CD8-positive, alpha-beta T cell (primary cell): ENCODE measurements at regions of chrX and their contacts with region 1.

Region 1: DNA sequence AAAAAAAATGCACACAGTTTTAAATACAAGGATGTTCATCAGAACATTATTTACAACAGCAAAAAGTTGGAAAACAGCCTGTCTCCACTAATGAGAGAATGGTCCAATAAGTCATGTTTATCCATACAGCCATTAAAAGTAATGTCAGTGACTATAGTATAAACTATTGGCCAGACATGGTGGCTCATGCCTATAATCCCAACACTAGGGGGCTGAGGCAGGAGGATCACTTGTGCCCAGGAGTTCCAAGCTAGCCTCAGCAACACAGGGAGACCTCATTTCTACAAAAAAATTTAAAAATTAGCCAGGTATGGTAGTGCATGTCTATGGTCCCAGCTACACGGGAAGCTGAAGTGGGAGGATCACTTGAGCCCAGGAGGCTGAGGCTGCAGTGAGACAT is 48.1 kb upstream of the IL13RA1 start:
- DNase-seq: no peak
- ATAC-seq: no peak
- H3K4me3 ChIP-seq: no peak overlapping the region
- H3K4me3 Mint-ChIP-seq: no peak overlapping the region
- H3K27ac ChIP-seq: no peak overlapping the region
- H3K27ac Mint-ChIP-seq: no peak overlapping the region
- H3K4me1 ChIP-seq: no peaks in the 10 kb centered on the region
- H3K4me1 Mint-ChIP-seq: no peaks in the 10 kb centered on the region
- H3K27me3 ChIP-seq: no peaks in the 10 kb centered on the region
- H3K27me3 Mint-ChIP-seq: no peaks in the 10 kb centered on the region
- CTCF ChIP-seq: no peak

Region 2: DNA sequence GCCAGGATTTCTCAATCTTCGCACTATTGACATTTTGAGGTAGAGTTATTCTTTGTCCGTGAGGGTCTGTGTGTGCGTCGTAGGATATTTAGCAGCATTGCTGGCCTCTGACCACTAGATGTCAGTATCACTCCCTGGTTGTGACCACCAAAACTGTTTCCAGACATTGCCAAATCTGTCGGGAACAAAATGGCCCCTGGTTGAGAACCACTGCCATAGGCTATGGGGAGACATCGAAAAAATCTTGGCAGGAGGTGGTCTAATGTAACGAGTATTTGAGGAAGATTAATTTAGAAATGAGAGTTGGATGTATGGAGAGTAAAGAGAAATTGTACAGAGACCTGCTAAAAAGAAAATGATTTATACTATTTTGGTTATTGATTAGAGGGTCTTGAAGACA is 75.3 kb before region 1 on chrX:
- CTCF ChIA-PET with region 1: no interaction called
- POLR2A ChIA-PET with region 1: no interaction called
- intact Hi-C with region 1: no loop called
- DNase-seq: peak in 7 of 9 experiments; percentile 11 to 67 (median 29)
- ATAC-seq: peak; percentile 77
- H3K4me3 ChIP-seq: no peak overlapping the region
- H3K4me3 Mint-ChIP-seq: no peak overlapping the region
- H3K27ac ChIP-seq: no peak overlapping the region
- H3K27ac Mint-ChIP-seq: peak overlapping the region; percentile 85
- H3K4me1 ChIP-seq: no peaks in the 10 kb centered on the region
- H3K4me1 Mint-ChIP-seq: peaks cover 26% of the 10 kb centered on the region
- H3K27me3 ChIP-seq: no peaks in the 10 kb centered on the region
- H3K27me3 Mint-ChIP-seq: no peaks in the 10 kb centered on the region
- CTCF ChIP-seq: peak; percentile 67

Region 3: GRCh38 chrX:118615141-118615540 is 64.1 kb before region 1 on chrX:
- CTCF ChIA-PET with region 1: no interaction called
- POLR2A ChIA-PET with region 1: no interaction called
- intact Hi-C with region 1: loop called (anchors 5 to 10 kb)
- DNase-seq: no peak
- ATAC-seq: no peak
- H3K4me3 ChIP-seq: no peak overlapping the region
- H3K4me3 Mint-ChIP-seq: no peak overlapping the region
- H3K27ac ChIP-seq: no peak overlapping the region
- H3K27ac Mint-ChIP-seq: no peak overlapping the region
- H3K4me1 ChIP-seq: no peaks in the 10 kb centered on the region
- H3K4me1 Mint-ChIP-seq: peaks cover 3% of the 10 kb centered on the region
- H3K27me3 ChIP-seq: no peaks in the 10 kb centered on the region
- H3K27me3 Mint-ChIP-seq: no peaks in the 10 kb centered on the region
- CTCF ChIP-seq: no peak

Region 4: DNA sequence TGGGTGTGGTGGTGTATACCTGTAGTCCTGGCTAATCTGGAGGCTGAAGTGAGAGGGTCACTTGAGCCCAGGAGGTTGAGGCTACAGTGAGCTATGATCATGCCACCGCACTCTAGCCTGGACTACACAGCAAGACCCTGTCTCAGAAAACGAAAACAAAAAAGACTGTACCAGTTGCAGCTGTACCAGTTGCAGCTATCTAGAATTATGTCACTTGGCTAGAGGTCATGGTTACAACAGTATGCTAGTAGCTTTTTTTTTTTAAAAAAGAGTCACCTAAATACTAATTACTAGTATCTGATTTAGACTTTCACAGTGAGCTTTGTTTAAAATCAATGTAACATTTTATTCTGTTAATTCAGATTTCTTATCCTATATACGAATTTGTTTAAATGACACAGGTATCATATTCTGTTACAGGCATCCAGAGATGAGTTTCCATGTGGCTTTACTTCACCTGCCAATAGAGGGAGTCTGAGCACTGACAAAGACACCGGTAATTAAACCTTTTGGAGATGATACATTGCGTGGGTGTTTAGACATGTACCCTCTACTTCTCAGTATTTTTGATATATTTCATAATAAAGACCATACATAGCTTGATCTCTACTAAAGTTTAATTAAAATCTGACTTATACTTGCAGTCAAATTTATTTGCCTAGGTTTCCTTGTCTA is 52.1 kb before region 1 on chrX:
- CTCF ChIA-PET with region 1: no interaction called
- POLR2A ChIA-PET with region 1: no interaction called
- intact Hi-C with region 1: loop called (anchors 5 to 10 kb)
- DNase-seq: no peak
- ATAC-seq: no peak
- H3K4me3 ChIP-seq: no peak overlapping the region
- H3K4me3 Mint-ChIP-seq: no peak overlapping the region
- H3K27ac ChIP-seq: no peak overlapping the region
- H3K27ac Mint-ChIP-seq: no peak overlapping the region
- H3K4me1 ChIP-seq: no peaks in the 10 kb centered on the region
- H3K4me1 Mint-ChIP-seq: no peaks in the 10 kb centered on the region
- H3K27me3 ChIP-seq: no peaks in the 10 kb centered on the region
- H3K27me3 Mint-ChIP-seq: no peaks in the 10 kb centered on the region
- CTCF ChIP-seq: no peak